Mammary epithelial cell (primary cell): ENCODE measurements at regions of chrX and their contacts with region 1.

Region 1: GRCh38 chrX:153379971-153380581 is 21.1 kb downstream of the PNMA6E start:
- DNase-seq: no peak
- H3K4me3 ChIP-seq: no peak overlapping the region
- H3K27ac ChIP-seq: no peak overlapping the region
- H3K4me1 ChIP-seq: no peaks in the 10 kb centered on the region
- H3K27me3 ChIP-seq: no peaks in the 10 kb centered on the region
- CTCF ChIP-seq: no peak

Region 2: DNA sequence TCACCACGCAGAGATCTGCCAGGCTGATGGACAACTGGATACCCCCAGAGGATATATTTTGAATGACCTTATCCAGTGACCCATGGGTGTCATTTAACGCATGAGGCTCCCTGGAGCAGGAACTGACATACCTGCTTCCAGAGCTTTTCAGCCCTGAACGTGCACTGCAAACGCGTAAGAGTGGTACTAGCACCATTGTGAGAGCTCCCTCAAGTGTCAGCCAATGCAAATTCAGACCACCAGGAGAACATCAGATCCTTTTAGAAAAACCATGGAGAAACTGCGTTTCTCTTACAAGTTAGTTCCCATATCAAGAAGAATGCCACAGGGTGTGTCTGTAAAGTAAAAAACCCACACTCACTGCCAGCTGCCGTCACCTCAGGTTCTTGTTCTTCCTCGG is 58.5 kb after region 1 on chrX:
- CTCF ChIA-PET with region 1: no interaction called
- dilution Hi-C with region 1: no loop called
- in situ Hi-C with region 1: loop called in 1 of 2 experiments (anchors 10 kb)
- intact Hi-C with region 1: no loop called
- DNase-seq: no peak
- H3K4me3 ChIP-seq: no peak overlapping the region
- H3K27ac ChIP-seq: no peak overlapping the region
- H3K4me1 ChIP-seq: peaks cover 18% of the 10 kb centered on the region
- H3K27me3 ChIP-seq: no peaks in the 10 kb centered on the region
- CTCF ChIP-seq: peak in 1 of 2 donors; percentile 22

Region 3: GRCh38 chrX:153448556-153449367 is 68.7 kb after region 1 on chrX:
- CTCF ChIA-PET with region 1: no interaction called
- dilution Hi-C with region 1: no loop called
- in situ Hi-C with region 1: no loop called
- intact Hi-C with region 1: no loop called
- DNase-seq: no peak
- H3K4me3 ChIP-seq: no peak overlapping the region
- H3K27ac ChIP-seq: no peak overlapping the region
- H3K4me1 ChIP-seq: peaks cover 4% of the 10 kb centered on the region
- H3K27me3 ChIP-seq: no peaks in the 10 kb centered on the region
- CTCF ChIP-seq: no peak